Left cardiac atrium (tissue), 4 donors: ENCODE measurements at regions of chr14 and their contacts with region 1.

Region 1: DNA sequence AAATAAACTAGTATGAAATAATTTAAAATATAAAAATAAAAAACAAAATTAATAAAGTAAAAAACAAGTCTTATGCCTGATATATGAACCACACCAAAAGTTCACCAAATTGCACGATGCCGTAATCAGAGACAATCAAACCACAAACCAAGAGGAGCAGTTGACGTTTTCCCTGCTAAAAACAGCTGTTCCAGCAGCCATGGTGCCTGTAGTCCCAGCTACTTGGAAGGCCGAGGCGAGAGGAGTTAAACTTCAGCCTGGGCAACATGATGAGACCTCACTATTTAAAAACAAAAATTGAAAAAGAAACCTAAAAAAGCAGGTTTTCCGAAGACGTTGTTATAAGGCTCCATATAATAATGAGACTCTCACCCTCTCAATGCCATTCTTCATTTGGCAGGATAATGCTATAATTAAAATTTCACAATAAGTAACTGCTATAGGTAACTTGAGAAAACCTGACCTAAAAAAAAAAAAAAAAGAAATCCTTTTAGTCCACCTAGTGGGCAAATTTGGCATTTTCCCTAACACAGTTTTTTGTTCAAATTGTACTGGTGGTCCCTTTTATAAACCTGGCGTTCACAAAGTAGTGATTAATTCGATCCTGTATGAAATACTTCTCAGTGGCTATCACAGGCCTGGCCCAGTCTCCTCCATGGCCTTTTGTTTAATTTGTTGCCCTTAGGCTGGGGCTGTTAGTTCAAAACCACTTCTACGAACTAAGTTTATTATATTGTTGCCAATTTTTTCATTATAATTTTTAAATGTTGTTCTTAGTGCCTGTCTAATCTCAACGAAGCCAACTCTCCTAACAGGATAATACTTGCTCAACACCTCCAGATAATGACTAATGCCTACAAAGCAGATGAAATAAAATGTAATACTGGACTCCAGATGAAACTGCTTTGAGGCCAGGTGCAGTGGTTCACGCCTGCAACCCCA is 62.1 kb downstream of the TNFAIP2 start:
- DNase-seq: no peak
- ATAC-seq: peak in 1 of 2 donors; percentile 70

Region 2: DNA sequence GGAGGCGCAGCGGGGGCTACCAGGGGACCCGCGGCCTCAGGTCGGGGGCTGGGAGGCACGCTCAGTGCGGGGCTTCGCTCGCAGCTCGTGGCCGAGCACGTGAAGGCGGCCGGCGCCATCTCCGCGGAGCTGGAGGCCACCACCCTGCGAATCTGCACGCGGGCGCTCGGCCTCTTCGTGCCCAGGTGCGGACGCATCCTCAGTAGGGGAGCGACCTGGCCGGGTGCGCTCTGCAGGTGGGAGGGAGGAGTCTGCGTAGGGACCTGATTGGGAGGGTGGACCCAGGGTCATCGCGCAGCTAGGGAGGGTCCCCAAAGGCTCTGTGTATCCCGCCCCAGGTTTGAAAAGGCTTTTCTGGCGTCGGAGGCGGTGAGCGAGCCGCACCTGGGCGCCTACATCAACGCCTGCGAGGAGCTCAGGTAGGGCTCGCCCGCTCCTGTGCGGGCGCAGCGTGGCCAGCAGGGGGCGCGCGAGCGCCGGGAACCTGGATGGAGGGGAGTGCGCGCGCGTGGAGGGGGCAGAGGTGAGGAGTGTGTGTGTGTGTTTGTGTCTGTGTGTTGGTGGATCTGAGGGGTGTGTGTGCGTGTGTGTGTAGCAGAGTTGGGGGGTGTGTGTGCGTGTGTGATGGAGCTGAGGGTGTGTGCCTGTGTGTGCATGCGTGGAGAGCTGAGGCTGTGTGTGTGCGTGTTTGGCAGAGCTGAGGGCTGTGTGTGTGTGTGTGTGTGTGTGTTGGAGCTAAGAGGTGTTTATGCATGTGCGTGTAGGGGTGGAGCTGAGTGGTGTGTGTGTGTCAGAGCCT is 80.5 kb before region 1 on chr14:
- intact Hi-C with region 1: loop called (anchors 2 to 5 kb)
- DNase-seq: peak; percentile 72
- ATAC-seq: peak; percentile 80 to 86

Region 3: GRCh38 chr14:103126493-103127304 is 58.6 kb before region 1 on chr14:
- intact Hi-C with region 1: no loop called
- DNase-seq: peak; percentile 37
- ATAC-seq: peak in 1 of 2 donors; percentile 1

Region 4: DNA sequence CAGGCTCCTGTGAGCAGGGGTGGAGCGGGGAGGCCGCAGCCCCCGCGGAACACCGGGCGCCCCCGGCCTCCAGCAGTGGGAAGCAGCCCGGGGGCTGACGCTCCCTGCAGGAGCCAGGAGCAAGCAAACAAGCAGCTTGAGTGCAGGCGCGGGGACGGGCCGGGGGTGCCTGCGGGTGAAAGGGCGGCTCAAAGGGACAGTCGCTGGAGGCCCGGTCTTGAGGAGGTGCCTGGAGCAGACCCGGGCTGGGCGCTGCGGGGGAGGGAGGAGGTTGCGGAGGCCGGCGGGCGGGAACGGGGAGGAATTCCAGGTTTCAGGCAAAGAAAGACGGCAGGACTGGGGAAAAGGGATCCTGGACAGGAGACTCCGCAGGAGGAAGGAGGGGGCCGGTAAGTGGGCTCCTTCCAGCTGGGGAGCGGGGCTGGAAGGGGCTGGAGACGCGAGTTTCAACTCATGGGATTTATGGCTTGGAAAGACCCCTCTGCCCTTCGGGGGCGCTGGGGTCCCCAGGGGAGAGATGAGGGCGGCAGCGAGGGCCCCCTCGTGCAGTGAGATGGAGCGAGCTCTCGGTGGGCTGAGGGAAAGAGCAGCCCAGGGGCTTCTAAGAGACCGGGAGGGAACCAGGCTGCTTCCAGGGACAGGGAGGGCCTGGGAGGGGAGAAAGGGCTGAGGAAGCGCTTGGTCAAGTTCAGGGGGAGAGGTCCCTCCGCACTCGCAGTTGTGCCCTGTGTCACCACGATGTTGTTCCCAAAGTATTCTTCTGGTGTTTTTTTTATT is 46.3 kb before region 1 on chr14:
- intact Hi-C with region 1: no loop called
- DNase-seq: no peak
- ATAC-seq: no peak